Psoas muscle (tissue), 8 donors: ENCODE measurements at regions of chr10 and their contacts with region 1.

Region 1: GRCh38 chr10:91758303-91759146 is 39.7 kb upstream of the TNKS2 start:
- DNase-seq: no peak
- ATAC-seq: peak; percentile 55 to 94 (median 65)
- H3K4me3 ChIP-seq: no peak overlapping the region
- H3K27ac ChIP-seq: no peak overlapping the region
- H3K4me1 ChIP-seq: no peaks in the 10 kb centered on the region
- H3K27me3 ChIP-seq: no peaks in the 10 kb centered on the region
- CTCF ChIP-seq: peak; percentile 63

Region 2: DNA sequence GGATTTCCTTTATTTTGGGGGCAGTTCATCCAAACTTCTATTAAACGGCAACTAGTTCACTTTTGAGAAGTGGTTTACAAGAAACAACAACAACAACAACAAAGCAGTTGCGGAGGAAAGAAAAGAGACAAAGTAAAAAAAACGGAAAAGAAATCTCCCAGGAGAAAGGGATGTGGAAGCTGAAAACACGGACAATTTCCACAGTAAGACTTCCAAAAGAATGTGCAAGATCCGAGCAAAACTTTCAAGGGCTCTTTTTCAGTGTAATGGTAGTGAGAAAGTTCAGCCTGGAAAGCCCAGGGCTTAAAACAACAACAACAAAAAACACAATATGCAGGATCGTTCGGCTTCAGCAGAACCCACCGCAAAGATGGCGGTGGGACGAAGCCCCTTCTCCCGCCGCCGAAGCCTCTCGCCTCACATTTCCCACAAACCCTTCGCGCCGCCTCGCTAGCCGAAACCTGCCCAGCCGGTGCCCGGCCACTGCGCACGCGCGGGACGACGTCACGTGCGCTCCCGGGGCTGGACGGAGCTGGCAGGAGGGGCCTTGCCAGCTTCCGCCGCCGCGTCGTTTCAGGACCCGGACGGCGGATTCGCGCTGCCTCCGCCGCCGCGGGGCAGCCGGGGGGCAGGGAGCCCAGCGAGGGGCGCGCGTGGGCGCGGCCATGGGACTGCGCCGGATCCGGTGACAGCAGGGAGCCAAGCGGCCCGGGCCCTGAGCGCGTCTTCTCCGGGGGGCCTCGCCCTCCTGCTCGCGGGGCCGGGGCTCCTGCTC is 39.5 kb after region 1 on chr10 and contains the start of gene TNKS2:
- intact Hi-C with region 1: loop called in 1 of 2 experiments (anchors 5 kb)
- DNase-seq: peak; percentile 96 to 97
- ATAC-seq: peak; percentile 81 to 95 (median 90)
- H3K4me3 ChIP-seq: peak within 1 kb of the TSS; percentile 93
- H3K27ac ChIP-seq: peak within 1 kb of the TSS; percentile 96
- H3K4me1 ChIP-seq: peaks cover 24% of the 10 kb centered on the region
- H3K27me3 ChIP-seq: no peaks in the 10 kb centered on the region
- CTCF ChIP-seq: no peak
- total RNA-seq, gene TNKS2: 29.8 to 49.5 (median 35.8) TPM

Region 3: DNA sequence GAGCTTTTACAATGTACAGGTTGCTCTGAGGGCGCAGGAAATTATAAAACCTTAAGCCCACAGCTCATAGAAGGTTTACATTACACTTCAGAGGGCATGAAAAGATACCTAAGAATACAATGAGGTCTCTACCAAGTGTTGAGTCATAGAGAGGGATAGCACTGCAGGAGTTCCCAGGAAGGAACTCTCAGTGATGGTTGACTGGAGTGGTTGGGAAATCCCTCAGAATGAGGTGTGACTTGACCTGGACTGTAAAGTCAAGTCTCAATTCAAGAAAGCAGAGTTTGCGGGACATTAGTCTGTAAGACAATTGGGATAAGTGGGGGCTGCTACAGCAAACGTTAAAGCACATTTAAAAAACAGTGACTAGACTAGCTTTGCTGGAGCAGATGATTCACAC is 61.6 kb after region 1 on chr10:
- intact Hi-C with region 1: loop called in 1 of 2 experiments (anchors 10 kb)
- DNase-seq: no peak
- ATAC-seq: peak; percentile 33 to 80 (median 68)
- H3K4me3 ChIP-seq: no peak overlapping the region
- H3K27ac ChIP-seq: no peak overlapping the region
- H3K4me1 ChIP-seq: no peaks in the 10 kb centered on the region
- H3K27me3 ChIP-seq: no peaks in the 10 kb centered on the region
- CTCF ChIP-seq: no peak

Region 4: GRCh38 chr10:91887272-91888076 is 128.9 kb after region 1 on chr10:
- intact Hi-C with region 1: no loop called
- DNase-seq: peak; percentile 33 to 57
- ATAC-seq: peak; percentile 45 to 69 (median 60)
- H3K4me3 ChIP-seq: peak overlapping the region; percentile 77
- H3K27ac ChIP-seq: no peak overlapping the region
- H3K4me1 ChIP-seq: peaks cover 12% of the 10 kb centered on the region
- H3K27me3 ChIP-seq: no peaks in the 10 kb centered on the region
- CTCF ChIP-seq: no peak

Region 5: GRCh38 chr10:91908337-91909116 is 150.0 kb after region 1 on chr10:
- intact Hi-C with region 1: loop called (anchors 2 to 5 kb)
- DNase-seq: peak; percentile 77 to 87
- ATAC-seq: peak; percentile 93 to 97 (median 96)
- H3K4me3 ChIP-seq: peak overlapping the region; percentile 82
- H3K27ac ChIP-seq: peak overlapping the region; percentile 74
- H3K4me1 ChIP-seq: peaks cover 10% of the 10 kb centered on the region
- H3K27me3 ChIP-seq: no peaks in the 10 kb centered on the region
- CTCF ChIP-seq: peak; percentile 35